ENCODE measurements at regions of chr16 and their contacts with region 1.

Region 1: DNA sequence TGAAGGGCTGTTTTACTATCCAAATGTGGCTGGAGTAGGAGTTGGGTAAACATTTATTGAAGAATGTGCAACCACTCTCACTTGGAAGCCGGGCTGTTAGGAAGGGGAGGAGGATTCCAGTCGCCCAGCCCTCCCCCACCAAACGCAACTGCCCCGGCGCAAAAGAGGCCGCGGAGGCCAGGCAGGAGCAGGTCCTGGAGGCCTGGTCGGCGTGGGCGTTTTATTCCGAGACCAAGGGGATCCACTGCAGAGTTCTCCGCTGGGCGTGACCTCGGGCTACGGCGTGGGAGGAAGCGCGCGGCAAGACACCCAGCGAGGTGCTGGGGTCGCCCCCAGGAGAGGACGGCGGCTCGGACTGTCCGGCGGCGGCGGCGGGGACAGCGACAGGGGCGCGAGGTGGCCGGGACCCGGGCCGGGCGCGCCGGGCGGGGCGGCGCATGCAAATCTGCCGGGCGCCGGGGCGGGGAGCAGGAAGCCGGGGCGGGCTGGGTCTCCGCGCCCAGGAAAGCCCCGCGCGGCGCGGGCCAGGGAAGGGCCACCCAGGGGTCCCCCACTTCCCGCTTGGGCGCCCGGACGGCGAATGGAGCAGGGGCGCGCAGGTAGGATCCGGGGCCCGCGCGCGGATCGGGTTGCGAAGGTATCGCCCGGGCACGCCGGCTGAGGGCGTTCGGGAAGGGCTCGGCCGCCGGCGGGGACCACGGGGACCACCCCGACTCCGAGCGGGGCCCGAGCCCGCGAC is at the start of gene IL4R:
- DNase-seq: peak; percentile 22
- ATAC-seq: peak; percentile 72
- H3K4me3 ChIP-seq: peak within 1 kb of the TSS; percentile 82 to 95
- H3K27ac ChIP-seq: peak within 1 kb of the TSS; percentile 82
- H3K4me1 ChIP-seq: peaks cover 13 to 58% of the 10 kb centered on the region in 2 experiments
- H3K27me3 ChIP-seq: no peaks in the 10 kb centered on the region
- CTCF ChIP-seq: no peak
- POLR2A ChIP-seq: no peak
- RAD21 ChIP-seq: no peak
- total RNA-seq, gene IL4R: 29.6 TPM

Region 2: DNA sequence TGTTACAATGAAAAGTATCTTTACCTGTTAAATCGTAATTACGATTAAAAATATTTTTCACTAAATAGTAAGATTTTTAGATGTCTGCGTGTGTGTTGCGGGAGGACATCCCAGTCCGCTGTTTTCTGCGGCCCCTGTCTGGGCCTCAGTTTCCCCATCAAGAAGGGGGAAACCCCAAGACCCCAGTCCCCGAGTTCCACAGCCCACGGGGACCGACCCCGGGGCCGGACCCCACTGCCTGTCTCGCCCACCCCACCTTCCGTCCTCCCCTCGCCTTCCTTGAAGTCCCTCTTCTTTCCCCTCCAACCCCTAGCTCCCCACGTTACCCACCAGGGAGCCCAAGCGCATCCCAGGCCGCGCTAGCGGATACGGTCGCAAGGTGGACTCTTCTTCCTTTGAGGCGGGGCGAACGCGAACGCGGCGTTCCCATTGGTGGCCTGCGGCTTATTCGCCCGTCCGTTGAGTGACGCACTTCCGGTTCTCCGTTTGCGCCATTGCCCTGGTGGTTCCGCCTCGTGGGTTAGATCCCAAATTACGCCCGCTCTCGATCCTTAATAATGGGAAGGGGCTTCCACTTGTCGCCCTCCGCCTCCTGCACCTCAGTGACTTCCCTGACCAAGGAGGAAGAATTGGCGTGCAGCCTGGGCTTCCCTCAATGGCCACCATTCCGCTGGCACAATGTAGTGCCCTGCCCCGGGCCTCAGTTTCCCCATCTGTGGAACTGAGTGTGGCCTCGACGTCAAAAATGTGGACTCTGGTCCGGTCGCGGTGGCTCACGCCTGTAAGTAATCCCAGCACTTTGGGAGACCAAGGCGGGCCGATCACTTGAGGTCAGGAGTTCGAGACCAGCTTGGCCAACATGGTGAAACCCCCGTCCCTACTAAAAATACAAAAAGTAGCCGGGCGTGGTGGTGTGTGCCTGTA is 45.0 kb before region 1 on chr16 and contains the start of gene NSMCE1:
- CTCF ChIA-PET with region 1: no interaction called
- POLR2A ChIA-PET with region 1: interaction called, 4 read pairs
- RAD21 ChIA-PET with region 1: no interaction called
- intact Hi-C with region 1: loop called (anchors 5 kb)
- DNase-seq: peak; percentile 91
- ATAC-seq: peak; percentile 95
- H3K4me3 ChIP-seq: peak within 1 kb of the TSS; percentile 79 to 92
- H3K27ac ChIP-seq: peak within 1 kb of the TSS; percentile 69
- H3K4me1 ChIP-seq: peaks cover 26 to 77% of the 10 kb centered on the region in 2 experiments
- H3K27me3 ChIP-seq: no peaks in the 10 kb centered on the region
- CTCF ChIP-seq: peak in 1 of 3 experiments; percentile 17; a peak in 1 of 6 replicates
- POLR2A ChIP-seq: peak; percentile 88
- RAD21 ChIP-seq: no peak
- total RNA-seq, gene NSMCE1: 85.6 TPM

Region 3: DNA sequence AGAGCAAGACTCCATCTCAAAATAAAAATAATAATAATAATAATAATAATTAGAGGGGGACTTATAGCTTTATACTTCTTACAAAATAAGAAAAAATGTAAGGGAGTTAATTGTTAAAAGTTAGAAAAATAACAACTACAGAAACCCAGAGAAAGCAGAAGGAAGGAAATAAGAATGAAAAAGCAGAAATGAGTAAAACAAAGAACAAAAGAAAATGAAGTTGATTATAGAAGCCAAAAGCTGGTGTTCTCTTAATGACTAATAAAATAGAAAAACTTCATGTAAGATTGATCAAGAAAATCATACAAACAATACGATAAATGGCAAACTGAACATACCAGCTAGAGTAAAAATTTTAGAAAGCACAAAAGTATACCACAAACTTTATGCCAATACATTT is 38.2 kb before region 1 on chr16:
- CTCF ChIA-PET with region 1: no interaction called
- POLR2A ChIA-PET with region 1: no interaction called
- RAD21 ChIA-PET with region 1: no interaction called
- intact Hi-C with region 1: loop called (anchors 5 kb)
- DNase-seq: no peak
- ATAC-seq: no peak
- H3K4me3 ChIP-seq: no peak overlapping the region
- H3K27ac ChIP-seq: no peak overlapping the region; the same call in 1 of the 2 replicates
- H3K4me1 ChIP-seq: peaks cover 28 to 48% of the 10 kb centered on the region in 2 experiments
- H3K27me3 ChIP-seq: no peaks in the 10 kb centered on the region
- CTCF ChIP-seq: no peak
- POLR2A ChIP-seq: no peak
- RAD21 ChIP-seq: no peak

Region 4: GRCh38 chr16:27426423-27427408 is 113.1 kb after region 1 on chr16:
- CTCF ChIA-PET with region 1: no interaction called
- POLR2A ChIA-PET with region 1: no interaction called
- RAD21 ChIA-PET with region 1: no interaction called
- intact Hi-C with region 1: no loop called
- DNase-seq: peak; percentile 28
- ATAC-seq: peak; percentile 77
- H3K4me3 ChIP-seq: no peak overlapping the region
- H3K27ac ChIP-seq: no peak overlapping the region
- H3K4me1 ChIP-seq: peaks cover 2 to 17% of the 10 kb centered on the region in 2 experiments; a peak in 3 of 4 replicates
- H3K27me3 ChIP-seq: no peaks in the 10 kb centered on the region
- CTCF ChIP-seq: peak in 1 of 3 experiments; percentile 16; a peak in 1 of 6 replicates
- POLR2A ChIP-seq: no peak
- RAD21 ChIP-seq: no peak